Mammary epithelial cell (primary cell): ENCODE measurements at regions of chr4 and their contacts with region 1.

Region 1: DNA sequence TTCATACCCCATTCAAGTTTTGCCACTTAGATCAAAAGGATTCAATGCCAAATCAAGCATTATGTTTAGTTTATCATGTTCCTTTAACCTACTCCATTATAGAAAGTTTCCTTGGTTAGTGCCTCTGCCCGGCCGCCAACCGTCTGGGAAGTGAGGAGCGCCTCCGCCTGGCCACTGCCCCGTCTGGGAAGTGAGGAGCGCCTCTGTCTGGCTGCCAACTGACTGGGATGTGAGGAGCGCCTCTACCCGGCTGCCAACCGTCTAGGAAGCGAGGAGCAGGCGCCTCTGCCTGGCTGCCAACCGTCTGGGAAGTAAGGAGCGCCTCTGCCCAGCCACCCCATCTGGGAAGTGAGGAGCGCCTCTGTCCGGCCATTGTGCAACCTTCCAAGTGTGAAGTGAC is 36.3 kb upstream of the PDGFRA start:
- DNase-seq: no peak
- H3K4me3 ChIP-seq: no peak overlapping the region
- H3K27ac ChIP-seq: no peak overlapping the region
- H3K4me1 ChIP-seq: no peaks in the 10 kb centered on the region
- H3K27me3 ChIP-seq: no peaks in the 10 kb centered on the region
- CTCF ChIP-seq: no peak

Region 2: GRCh38 chr4:54139332-54139731 is 53.5 kb before region 1 on chr4:
- CTCF ChIA-PET with region 1: no interaction called
- dilution Hi-C with region 1: loop called (anchors 5 kb)
- in situ Hi-C with region 1: no loop called
- intact Hi-C with region 1: no loop called
- DNase-seq: no peak
- H3K4me3 ChIP-seq: no peak overlapping the region
- H3K27ac ChIP-seq: no peak overlapping the region
- H3K4me1 ChIP-seq: no peaks in the 10 kb centered on the region
- H3K27me3 ChIP-seq: no peaks in the 10 kb centered on the region
- CTCF ChIP-seq: no peak

Region 3: DNA sequence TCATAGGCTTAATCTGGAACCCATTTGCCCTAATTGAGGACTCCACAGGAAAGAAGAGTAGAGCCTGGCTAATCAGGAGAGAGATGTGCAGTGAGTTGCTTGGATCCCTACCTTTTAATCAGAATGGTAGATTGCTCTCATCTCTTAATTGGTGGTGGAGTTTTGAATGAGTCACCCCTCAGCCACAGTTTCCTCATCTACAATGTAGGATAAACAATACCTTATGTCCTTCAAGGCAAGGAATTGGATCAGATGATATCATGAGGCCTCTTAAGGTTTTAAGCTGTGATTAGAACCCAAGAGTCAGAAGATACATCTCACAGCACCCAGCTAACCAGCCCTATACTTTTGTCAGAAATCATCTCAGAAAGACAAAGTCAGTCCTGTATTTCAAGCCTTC is 75.3 kb after region 1 on chr4:
- CTCF ChIA-PET with region 1: no interaction called
- dilution Hi-C with region 1: no loop called
- in situ Hi-C with region 1: no loop called
- intact Hi-C with region 1: no loop called
- DNase-seq: peak; percentile 33
- H3K4me3 ChIP-seq: no peak overlapping the region
- H3K27ac ChIP-seq: no peak overlapping the region
- H3K4me1 ChIP-seq: no peaks in the 10 kb centered on the region
- H3K27me3 ChIP-seq: no peaks in the 10 kb centered on the region
- CTCF ChIP-seq: no peak